ENCODE measurements at regions of chr10 and their contacts with region 1.

Region 1: DNA sequence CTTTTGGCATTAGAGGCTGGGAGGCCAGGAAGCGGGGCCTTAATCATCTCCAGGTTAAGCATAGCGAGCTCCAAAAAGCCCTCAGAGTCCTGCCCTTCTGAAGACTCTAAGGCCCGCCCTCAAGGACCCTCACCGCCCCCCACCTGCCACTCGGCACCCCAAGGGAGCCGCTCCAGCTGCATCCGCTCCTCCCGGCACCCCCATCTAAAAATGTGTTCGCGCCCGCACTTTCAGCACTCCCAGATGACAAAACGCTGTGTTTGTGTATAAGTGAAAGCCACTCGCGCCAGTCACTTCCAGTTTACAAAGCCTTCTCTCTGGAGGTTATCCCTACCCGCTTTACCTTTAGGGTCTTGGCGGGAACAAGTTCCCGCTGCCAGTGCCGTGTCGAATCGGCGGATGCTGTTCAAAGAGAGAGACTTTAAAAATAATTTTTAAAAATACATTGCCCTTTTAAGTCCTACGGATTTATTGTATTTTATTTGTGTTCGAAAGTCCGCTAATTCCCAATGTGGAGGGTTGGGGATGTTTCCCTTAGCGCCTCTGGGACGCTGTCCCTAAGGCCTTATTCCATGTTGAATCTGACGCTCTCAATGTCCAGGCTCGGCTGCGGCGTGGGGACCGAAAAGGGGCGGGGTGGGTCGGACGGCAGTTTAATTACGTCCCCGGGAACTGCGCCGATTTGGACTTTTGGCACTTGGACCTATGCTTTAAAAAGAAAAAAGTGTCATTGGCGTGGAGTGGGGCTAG is at the starts of genes DCLRE1A and NHLRC2:
- DNase-seq: peak; percentile 45
- H3K4me3 Mint-ChIP-seq: peak within 1 kb of the TSS; percentile 98
- H3K27ac Mint-ChIP-seq: peak within 1 kb of the TSS; percentile 93
- H3K4me1 Mint-ChIP-seq: peaks cover 51% of the 10 kb centered on the region
- H3K27me3 Mint-ChIP-seq: no peaks in the 10 kb centered on the region
- total RNA-seq, gene DCLRE1A: 14.4 and 16.0 TPM in 2 replicates
- total RNA-seq, gene NHLRC2: 28.2 and 28.9 TPM in 2 replicates

Region 2: DNA sequence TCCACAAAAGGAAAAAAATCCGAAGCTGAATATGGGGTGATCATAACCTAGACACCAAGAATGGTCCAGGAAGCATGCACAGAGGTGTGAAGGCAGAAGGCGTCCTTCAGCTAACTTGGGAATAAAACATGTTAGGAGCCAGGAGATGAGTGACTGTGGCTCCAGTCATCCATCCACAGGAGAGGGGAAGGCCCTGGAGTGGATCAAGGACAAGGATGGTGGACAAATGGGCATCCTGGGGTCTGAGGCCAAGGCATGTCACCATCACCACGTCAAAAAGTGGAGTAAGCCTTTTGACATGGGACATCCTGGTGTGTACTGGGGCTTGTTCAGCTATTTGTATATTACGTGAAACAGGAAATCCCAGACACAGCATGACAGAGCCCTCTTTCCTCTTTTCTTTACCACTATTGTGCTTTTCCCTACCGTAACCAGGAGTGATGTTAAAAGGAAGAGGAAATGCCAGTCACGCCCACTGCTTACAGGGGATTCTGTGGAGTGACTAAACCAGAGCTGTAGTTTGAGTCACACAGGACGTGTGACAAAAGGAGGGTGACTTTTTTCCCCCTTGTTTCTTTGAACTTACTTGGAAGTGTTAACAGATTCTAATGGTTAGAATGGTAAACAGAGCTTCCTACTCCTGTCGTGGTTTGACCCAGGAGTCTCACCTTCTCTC is 1464.9 kb before region 1 on chr10:
- intact Hi-C with region 1: loop called (anchors 10 kb)
- DNase-seq: peak; percentile 55
- H3K4me3 Mint-ChIP-seq: peak overlapping the region; percentile 57
- H3K27ac Mint-ChIP-seq: peak overlapping the region; percentile 88
- H3K4me1 Mint-ChIP-seq: peaks cover 67% of the 10 kb centered on the region
- H3K27me3 Mint-ChIP-seq: no peaks in the 10 kb centered on the region

Region 3: GRCh38 chr10:113820507-113820906 is 33.7 kb before region 1 on chr10:
- intact Hi-C with region 1: no loop called
- DNase-seq: no peak
- H3K4me3 Mint-ChIP-seq: no peak overlapping the region
- H3K27ac Mint-ChIP-seq: no peak overlapping the region
- H3K4me1 Mint-ChIP-seq: no peaks in the 10 kb centered on the region
- H3K27me3 Mint-ChIP-seq: peaks cover 8% of the 10 kb centered on the region

Region 4: DNA sequence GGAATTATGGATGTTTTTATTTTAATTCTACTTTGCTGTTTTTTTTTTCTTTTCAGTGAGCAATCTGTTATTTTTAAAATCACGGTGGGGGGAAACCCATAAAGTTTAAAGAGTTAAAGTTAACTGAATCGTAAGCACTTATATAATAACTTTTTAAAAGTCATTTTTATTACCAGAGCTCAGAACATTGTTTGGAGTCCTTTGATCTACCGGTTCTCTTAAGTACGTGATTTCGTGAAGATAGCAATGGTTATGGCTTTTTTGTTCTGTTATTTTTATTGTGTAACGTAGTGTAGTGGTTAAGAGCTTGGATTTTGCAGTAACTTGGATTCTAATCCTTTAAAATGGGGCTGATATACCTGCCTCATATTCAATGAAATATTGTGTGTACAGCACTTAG is 57.7 kb after region 1 on chr10:
- intact Hi-C with region 1: loop called (anchors 2 kb)
- DNase-seq: no peak
- H3K4me3 Mint-ChIP-seq: no peak overlapping the region
- H3K27ac Mint-ChIP-seq: no peak overlapping the region
- H3K4me1 Mint-ChIP-seq: no peaks in the 10 kb centered on the region
- H3K27me3 Mint-ChIP-seq: no peaks in the 10 kb centered on the region

Region 5: DNA sequence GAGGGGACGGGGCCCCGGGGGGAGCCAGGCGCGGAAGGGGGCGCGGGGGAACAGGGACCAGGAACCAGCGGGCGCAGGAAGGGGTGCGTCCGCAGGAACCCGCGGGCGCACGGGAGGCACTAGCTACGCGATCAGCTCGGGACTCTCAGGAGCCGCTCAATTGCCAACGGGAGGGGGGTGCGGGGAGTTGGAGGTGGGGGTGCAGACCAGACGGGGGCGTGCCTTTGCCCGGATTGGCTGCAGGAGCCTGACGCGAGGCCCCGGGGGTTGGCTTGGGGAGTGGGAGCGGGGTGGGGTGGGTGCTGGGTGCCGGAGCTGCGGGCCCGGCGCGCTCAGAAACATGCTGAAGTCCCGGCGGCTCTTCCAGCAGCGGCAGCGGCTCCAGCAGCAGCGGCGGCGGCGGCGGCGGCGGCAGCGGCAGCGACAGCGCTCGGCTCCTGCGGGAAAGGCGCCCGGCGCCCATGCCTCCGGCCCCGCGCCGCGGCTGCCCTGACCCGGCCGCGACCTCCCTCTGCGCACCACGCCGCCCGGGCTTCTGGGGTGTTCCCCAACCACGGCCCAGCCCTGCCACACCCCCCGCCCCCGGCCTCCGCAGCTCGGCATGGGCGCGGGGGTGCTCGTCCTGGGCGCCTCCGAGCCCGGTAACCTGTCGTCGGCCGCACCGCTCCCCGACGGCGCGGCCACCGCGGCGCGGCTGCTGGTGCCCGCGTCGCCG is 189.5 kb after region 1 on chr10 and contains the start of gene ADRB1:
- intact Hi-C with region 1: loop called (anchors 2 kb)
- DNase-seq: no peak
- H3K4me3 Mint-ChIP-seq: peak within 1 kb of the TSS; percentile 67
- H3K27ac Mint-ChIP-seq: no peak within 1 kb of the TSS
- H3K4me1 Mint-ChIP-seq: peaks cover 8% of the 10 kb centered on the region
- H3K27me3 Mint-ChIP-seq: peaks cover 82% of the 10 kb centered on the region
- total RNA-seq, gene ADRB1: not detected in 2 replicates

Region 6: DNA sequence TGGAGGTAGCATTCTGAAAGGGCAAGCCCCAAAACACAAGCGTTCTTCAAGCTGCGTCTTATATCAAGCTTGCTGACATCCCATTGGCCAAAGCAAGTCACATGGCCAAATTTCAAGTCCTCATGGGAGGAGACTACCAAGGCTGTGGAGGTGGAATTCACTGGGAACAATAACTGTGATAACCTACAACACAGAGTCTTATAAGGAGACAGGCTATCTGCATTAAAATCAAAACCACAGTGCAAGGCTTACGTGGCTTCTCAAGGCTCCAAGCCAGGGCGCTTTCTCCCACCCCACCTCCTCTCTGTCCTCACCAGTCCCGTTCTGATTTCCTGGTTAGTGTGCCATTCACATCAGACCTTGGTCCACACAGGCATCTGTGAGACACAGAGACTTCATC is 228.9 kb after region 1 on chr10:
- intact Hi-C with region 1: loop called (anchors 5 kb)
- DNase-seq: no peak
- H3K4me3 Mint-ChIP-seq: no peak overlapping the region
- H3K27ac Mint-ChIP-seq: no peak overlapping the region
- H3K4me1 Mint-ChIP-seq: no peaks in the 10 kb centered on the region
- H3K27me3 Mint-ChIP-seq: peaks cover 12% of the 10 kb centered on the region

Region 7: DNA sequence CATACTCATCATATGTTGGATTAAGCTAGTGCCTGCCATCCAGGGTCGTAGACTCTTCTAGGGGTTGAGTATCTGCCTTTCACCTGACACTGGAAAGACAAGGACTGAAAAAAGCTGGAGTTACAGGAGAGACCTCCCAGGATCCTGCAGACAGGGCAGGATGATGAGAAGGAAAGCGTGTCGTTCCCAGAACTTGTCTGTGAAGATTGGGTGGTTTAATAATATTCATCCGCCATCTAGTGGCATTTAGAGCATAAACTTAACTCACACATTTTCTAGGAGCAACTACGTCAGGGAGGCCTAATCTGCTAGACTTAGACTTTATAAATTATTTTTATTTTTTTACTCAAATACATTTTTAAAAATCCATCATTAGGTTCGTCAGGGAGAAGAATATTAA is 249.1 kb after region 1 on chr10:
- intact Hi-C with region 1: loop called (anchors 5 kb)
- DNase-seq: no peak
- H3K4me3 Mint-ChIP-seq: no peak overlapping the region
- H3K27ac Mint-ChIP-seq: no peak overlapping the region
- H3K4me1 Mint-ChIP-seq: peaks cover 21% of the 10 kb centered on the region
- H3K27me3 Mint-ChIP-seq: peaks cover 47% of the 10 kb centered on the region

Region 8: GRCh38 chr10:114173921-114174694 is 319.9 kb after region 1 on chr10 and contains the start of gene CCDC186:
- intact Hi-C with region 1: loop called (anchors 2 kb)
- DNase-seq: peak; percentile 96
- H3K4me3 Mint-ChIP-seq: peak within 1 kb of the TSS; percentile 95
- H3K27ac Mint-ChIP-seq: peak within 1 kb of the TSS; percentile 91
- H3K4me1 Mint-ChIP-seq: peaks cover 35% of the 10 kb centered on the region
- H3K27me3 Mint-ChIP-seq: peaks cover 12% of the 10 kb centered on the region
- total RNA-seq, gene CCDC186: 12.1 and 13.0 TPM in 2 replicates